ENCODE measurements at regions of chr6 and their contacts with region 1.

Region 1: GRCh38 chr6:63764318-63764916 is 128.8 kb downstream of the PHF3 start:
- DNase-seq: no peak
- CTCF ChIP-seq: no peak

Region 2: DNA sequence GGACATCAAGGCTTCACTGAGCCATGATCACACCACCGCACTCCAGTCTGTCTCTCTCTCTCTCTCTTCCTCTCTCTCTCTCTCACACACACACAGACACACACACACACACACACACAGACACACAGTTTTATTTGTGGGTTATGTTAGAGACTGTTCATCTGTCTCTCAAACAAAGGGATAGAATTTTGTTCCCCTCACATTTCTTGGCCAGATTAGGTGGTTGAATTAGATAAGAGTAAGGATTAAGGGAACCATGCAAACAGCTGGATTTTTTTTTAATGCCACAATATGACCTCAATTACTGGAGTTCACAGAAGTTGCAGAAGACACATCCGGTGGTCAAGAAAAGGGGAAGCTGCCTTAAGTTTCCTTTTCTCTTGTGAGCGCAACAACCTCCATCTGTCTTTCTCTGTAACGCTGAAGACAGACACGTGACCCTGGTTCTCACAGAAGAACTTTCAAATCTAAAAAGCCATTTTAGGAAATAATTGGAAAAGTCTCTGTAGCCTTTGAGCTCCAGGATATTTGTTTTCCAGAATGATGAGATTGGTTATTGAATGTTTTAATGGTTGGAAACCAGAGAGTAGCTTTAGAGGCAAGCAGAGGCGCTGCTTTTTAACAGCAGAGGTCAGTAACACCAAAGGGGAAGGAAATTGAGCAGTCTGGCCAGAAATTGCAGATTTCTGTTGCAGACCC is 411.7 kb before region 1 on chr6:
- in situ Hi-C with region 1: loop called (anchors 10 kb)
- DNase-seq: peak; percentile 53
- CTCF ChIP-seq: peak; percentile 54

Region 3: GRCh38 chr6:63389191-63389844 is 375.1 kb before region 1 on chr6:
- in situ Hi-C with region 1: no loop called
- DNase-seq: no peak
- CTCF ChIP-seq: no peak

Region 4: GRCh38 chr6:63598049-63599036 is 166.1 kb before region 1 on chr6:
- in situ Hi-C with region 1: loop called (anchors 10 kb)
- DNase-seq: peak; percentile 76
- CTCF ChIP-seq: peak; percentile 85

Region 5: DNA sequence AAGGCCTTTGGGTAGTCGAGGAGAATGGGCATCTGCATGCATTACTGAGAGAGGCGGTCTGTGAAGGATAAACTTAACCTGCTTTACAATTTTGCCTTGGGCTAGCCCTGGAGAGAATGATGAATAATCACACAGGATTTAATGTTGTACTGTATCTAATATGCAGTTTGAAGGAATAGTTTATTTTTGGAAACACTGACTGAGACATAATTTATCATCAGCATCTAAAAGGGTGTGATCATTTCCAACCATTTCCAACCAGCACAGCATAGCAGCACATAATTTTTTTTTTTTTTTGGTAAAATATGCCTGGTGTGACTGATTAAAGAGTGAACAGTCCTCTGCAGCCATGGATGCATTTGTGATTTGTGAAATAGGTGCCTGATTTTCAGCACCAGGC is 390.6 kb after region 1 on chr6:
- in situ Hi-C with region 1: no loop called
- DNase-seq: no peak
- CTCF ChIP-seq: no peak